Heart right ventricle (tissue), 16 donors: ENCODE measurements at regions of chr17 and their contacts with region 1.

Region 1: DNA sequence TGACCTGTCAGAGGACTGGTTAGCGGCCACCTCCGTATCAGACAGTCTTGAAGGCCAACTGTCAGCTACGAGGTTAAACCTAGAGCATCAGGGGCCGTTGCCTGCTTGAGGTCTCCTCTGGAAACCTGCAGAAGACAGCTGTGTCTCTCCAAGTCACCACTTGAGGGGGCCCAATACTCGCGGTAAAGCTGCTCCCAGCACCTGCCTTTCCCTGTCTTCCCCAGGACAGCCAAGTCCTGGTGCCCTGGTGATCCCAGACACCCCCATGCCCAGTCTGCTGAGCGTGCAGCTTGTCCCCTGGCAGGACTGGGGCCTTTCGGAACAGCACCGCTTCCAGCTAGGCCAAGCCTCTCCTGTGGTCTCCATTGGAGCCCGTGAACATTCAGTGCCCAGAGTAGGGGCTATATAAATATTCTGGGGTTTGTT is 80.1 kb downstream of the DNAH17 start:
- DNase-seq: peak; percentile 62 to 76
- ATAC-seq: peak; percentile 75 to 89 (median 84)
- H3K4me3 ChIP-seq: no peak overlapping the region
- H3K27ac ChIP-seq: peak overlapping the region in 1 of 10 donors; percentile 2
- H3K4me1 ChIP-seq: peaks cover 0 to 20% (median 5%) of the 10 kb centered on the region in 9 donors
- H3K27me3 ChIP-seq: peaks cover 0 to 8% (median 0%) of the 10 kb centered on the region in 7 donors
- CTCF ChIP-seq: peak; percentile 64 to 89 (median 79)

Region 2: DNA sequence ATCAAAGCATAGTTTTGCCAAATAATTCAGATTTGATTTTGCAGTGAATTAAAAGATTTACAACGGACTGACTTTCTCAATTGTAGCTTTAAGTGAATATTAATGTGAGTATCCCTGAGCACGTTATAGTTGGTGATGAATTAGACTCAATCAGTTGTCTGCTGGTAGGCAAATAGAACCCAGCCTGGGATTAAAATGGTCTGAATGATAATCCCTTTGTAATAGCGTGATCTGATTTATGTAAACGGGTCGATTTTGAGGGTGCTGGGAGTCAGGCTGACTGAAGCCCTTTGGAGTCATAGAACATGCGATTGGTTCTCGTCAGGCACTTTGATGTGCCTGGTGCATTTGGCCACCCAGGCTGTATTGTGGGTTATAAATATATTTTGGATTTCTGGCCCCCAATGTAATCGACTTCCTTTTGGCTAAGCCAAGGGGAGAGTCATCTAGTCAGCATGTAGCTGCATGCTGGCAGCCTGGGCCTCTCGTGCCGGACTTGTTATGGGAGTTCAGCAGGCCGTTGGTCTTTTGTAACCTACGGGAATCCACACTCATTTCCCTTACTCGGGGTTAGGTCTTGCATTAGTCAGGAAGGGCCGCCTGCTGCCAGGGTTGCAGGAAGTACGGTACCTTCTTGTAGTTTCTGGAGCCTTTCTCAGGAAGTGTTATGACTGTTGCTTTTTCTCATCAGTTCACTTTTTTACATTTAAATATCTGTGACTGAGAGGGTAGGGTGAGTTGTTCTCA is 113.2 kb before region 1 on chr17:
- intact Hi-C with region 1: no loop called
- DNase-seq: peak; percentile 71 to 75
- ATAC-seq: peak; percentile 59 to 90 (median 76)
- H3K4me3 ChIP-seq: peak overlapping the region in 1 of 10 donors; percentile 6
- H3K27ac ChIP-seq: peak overlapping the region; percentile 8 to 99 (median 70)
- H3K4me1 ChIP-seq: peaks cover 20 to 100% (median 98%) of the 10 kb centered on the region in 9 donors
- H3K27me3 ChIP-seq: no peaks in the 10 kb centered on the region
- CTCF ChIP-seq: no peak

Region 3: GRCh38 chr17:78600181-78600721 is 103.1 kb after region 1 on chr17:
- intact Hi-C with region 1: loop called in 2 of 10 experiments (anchors 5 to 10 kb)
- DNase-seq: peak in 1 of 2 donors; percentile 22
- ATAC-seq: peak in 6 of 8 donors; percentile 25 to 71 (median 44)
- H3K4me3 ChIP-seq: no peak overlapping the region
- H3K27ac ChIP-seq: no peak overlapping the region
- H3K4me1 ChIP-seq: peaks cover 0 to 27% (median 7%) of the 10 kb centered on the region in 9 donors
- H3K27me3 ChIP-seq: no peaks in the 10 kb centered on the region
- CTCF ChIP-seq: no peak

Region 4: DNA sequence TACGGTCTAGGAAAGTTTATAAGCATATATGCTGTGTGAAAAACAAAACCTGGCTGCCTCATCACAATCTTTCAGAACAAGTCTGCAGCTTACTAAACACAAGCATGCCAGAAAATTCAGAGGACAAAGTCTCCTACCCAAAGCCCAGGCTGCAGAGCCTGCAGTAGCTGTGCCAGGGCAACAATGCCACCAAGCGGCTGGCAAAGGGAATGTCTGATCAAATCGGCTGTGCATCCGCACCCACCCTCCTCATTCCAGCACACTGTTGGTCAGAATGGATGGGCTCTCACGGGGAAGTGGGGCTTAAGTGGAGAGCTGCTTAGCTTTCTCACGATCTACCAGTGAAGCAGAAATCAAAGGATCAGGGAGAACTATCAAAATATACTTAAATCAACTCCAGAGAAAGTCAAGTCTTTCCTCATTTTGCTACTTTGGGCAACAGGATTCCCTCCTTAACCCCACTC is 211.4 kb after region 1 on chr17:
- intact Hi-C with region 1: loop called (anchors 1 to 10 kb)
- DNase-seq: peak; percentile 58 to 64
- ATAC-seq: peak; percentile 75 to 89 (median 88)
- H3K4me3 ChIP-seq: no peak overlapping the region
- H3K27ac ChIP-seq: peak overlapping the region in 2 of 10 donors; percentile 9 to 38
- H3K4me1 ChIP-seq: peaks cover 0 to 51% (median 31%) of the 10 kb centered on the region in 9 donors
- H3K27me3 ChIP-seq: no peaks in the 10 kb centered on the region
- CTCF ChIP-seq: peak; percentile 74 to 91 (median 83)

Region 5: DNA sequence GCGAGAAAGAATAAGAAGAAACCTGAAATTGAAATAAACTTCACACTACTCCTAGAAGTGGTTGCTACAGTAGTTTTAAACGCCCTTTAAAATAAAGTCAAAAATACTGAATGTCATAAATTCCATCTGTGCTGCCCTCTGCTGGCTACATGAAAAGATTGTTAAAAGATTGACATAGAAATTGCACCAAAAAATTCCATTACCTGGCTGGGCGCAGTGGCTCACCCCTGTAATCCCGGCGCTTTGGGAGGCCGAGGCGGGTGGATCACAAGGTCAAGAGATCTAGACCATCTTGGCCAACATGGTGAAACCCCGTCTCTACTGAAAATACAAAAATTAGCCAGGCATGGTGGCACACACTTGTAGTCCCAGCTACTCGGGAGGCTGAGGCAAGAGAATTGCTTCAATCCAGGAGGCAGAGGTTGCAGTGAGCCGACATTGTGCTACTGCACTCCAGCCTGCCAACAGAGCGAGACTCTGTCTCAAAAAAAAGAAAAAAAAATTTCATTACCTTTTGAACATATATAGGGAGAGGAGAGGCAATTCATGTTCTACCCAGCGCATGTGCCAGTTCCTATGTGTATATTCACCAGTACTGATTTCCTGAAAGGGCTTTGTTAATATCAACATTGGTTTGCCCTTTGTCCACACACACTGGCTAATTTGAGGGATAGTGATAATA is 248.4 kb after region 1 on chr17:
- intact Hi-C with region 1: loop called in 3 of 10 experiments (anchors 1 to 5 kb)
- DNase-seq: peak in 1 of 2 donors; percentile 54
- ATAC-seq: no peak
- H3K4me3 ChIP-seq: no peak overlapping the region
- H3K27ac ChIP-seq: peak overlapping the region in 1 of 10 donors; percentile 87
- H3K4me1 ChIP-seq: peaks cover 10 to 92% (median 60%) of the 10 kb centered on the region in 9 donors
- H3K27me3 ChIP-seq: no peaks in the 10 kb centered on the region
- CTCF ChIP-seq: peak in 8 of 9 donors; percentile 58 to 75 (median 65)

Region 6: GRCh38 chr17:78798695-78799559 is 301.8 kb after region 1 on chr17:
- intact Hi-C with region 1: loop called (anchors 1 to 10 kb)
- DNase-seq: no peak
- ATAC-seq: peak in 6 of 8 donors; percentile 18 to 44 (median 30)
- H3K4me3 ChIP-seq: no peak overlapping the region
- H3K27ac ChIP-seq: no peak overlapping the region
- H3K4me1 ChIP-seq: peaks cover 3 to 39% (median 26%) of the 10 kb centered on the region in 9 donors
- H3K27me3 ChIP-seq: no peaks in the 10 kb centered on the region
- CTCF ChIP-seq: peak in 8 of 9 donors; percentile 24 to 63 (median 56)

Region 7: GRCh38 chr17:78806451-78806850 is 309.3 kb after region 1 on chr17:
- intact Hi-C with region 1: loop called in 1 of 10 experiments (anchors 10 kb)
- DNase-seq: no peak
- ATAC-seq: peak in 2 of 8 donors; percentile 23 to 29
- H3K4me3 ChIP-seq: no peak overlapping the region
- H3K27ac ChIP-seq: peak overlapping the region in 4 of 10 donors; percentile 1 to 81 (median 69)
- H3K4me1 ChIP-seq: peaks cover 0 to 35% (median 15%) of the 10 kb centered on the region in 9 donors
- H3K27me3 ChIP-seq: no peaks in the 10 kb centered on the region
- CTCF ChIP-seq: peak in 1 of 9 donors; percentile 17

Region 8: GRCh38 chr17:78970834-78971773 is 474.0 kb after region 1 on chr17:
- intact Hi-C with region 1: loop called in 1 of 10 experiments (anchors 10 kb)
- DNase-seq: peak; percentile 83 to 87
- ATAC-seq: peak; percentile 23 to 58 (median 46)
- H3K4me3 ChIP-seq: peak overlapping the region in 2 of 10 donors; percentile 6 to 19
- H3K27ac ChIP-seq: peak overlapping the region in 9 of 10 donors; percentile 23 to 68 (median 54)
- H3K4me1 ChIP-seq: peaks cover 3 to 52% (median 32%) of the 10 kb centered on the region in 9 donors
- H3K27me3 ChIP-seq: no peaks in the 10 kb centered on the region
- CTCF ChIP-seq: peak; percentile 82 to 94 (median 90)

Region 9: DNA sequence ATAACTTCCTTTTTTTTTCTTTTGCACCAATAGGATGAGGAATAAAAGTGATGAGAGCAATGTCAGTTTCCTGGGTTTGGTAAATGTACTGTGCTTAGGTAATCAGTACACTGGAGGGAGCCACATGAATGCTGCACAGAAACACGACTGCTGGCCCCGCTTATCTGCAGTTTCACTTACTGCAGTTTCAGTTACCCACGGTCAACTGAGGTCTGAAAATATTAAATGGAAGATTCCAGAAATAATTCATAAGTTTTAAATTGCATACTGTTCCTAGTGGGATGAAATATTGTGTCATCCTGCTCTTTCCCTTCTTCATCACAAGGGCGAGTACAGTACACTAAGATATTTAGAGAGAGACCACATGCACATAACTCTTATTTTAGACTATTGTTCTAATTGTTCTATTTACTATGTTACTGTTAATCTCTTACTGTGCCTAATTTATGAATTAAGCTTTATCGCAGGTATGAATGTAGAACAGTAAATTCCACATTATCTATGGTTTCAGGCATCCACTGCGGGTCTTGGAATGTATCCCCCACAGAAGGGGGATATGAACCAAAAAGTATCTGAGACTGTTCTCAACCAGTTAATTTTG is 489.0 kb after region 1 on chr17:
- intact Hi-C with region 1: no loop called
- DNase-seq: peak; percentile 35 to 53
- ATAC-seq: peak; percentile 45 to 86 (median 78)
- H3K4me3 ChIP-seq: peak overlapping the region in 9 of 10 donors; percentile 19 to 59 (median 51)
- H3K27ac ChIP-seq: peak overlapping the region; percentile 39 to 93 (median 82)
- H3K4me1 ChIP-seq: peaks cover 0 to 40% (median 30%) of the 10 kb centered on the region in 9 donors
- H3K27me3 ChIP-seq: no peaks in the 10 kb centered on the region
- CTCF ChIP-seq: peak in 8 of 9 donors; percentile 29 to 65 (median 52)